Activated CD8-positive, alpha-beta T cell treated with anti-CD3 and anti-CD28 coated beads for 36 hours (primary cell): ENCODE measurements at regions of chr15 and their contacts with region 1.

Region 1: DNA sequence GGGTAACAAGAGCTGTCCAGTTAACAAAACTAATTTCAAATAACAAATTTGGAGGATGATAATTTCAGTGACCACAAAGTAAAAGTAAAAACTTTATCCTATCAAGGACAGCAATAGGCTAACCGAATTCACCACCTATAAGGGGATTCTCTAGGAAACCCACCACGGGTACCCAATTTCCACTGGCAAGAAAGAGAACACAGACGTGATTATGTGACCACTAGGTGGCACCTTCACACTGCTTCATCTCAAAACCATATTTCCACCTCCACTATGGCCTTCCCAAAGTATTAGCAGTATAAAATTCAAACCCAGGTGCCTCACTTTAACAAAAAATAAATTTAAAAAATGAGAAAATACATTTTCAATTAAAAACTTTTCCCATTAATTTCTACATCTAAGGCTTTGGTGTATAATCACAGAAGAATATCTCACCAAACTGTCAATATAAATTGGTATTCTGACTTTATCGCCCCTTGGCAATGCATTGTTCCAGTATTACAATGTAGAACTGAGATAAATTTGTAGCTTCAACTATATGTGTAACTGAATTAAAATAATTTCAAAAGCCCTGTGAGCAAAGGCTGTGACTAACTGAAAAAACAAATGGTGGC is 96.5 kb downstream of the FSIP1 start:
- DNase-seq: peak; percentile 51
- ATAC-seq: no peak
- H3K4me3 Mint-ChIP-seq: no peak overlapping the region
- H3K27ac Mint-ChIP-seq: no peak overlapping the region
- H3K4me1 Mint-ChIP-seq: no peaks in the 10 kb centered on the region
- H3K27me3 Mint-ChIP-seq: no peaks in the 10 kb centered on the region
- CTCF ChIP-seq: peak; percentile 96

Region 2: GRCh38 chr15:39666677-39667076 is 19.4 kb before region 1 on chr15:
- CTCF ChIA-PET with region 1: interaction called, 14 read pairs
- POLR2A ChIA-PET with region 1: no interaction called
- intact Hi-C with region 1: no loop called
- DNase-seq: no peak
- ATAC-seq: no peak
- H3K4me3 Mint-ChIP-seq: no peak overlapping the region
- H3K27ac Mint-ChIP-seq: no peak overlapping the region
- H3K4me1 Mint-ChIP-seq: no peaks in the 10 kb centered on the region
- H3K27me3 Mint-ChIP-seq: no peaks in the 10 kb centered on the region
- CTCF ChIP-seq: no peak

Region 3: GRCh38 chr15:39717134-39717533 is 31.0 kb after region 1 on chr15:
- CTCF ChIA-PET with region 1: interaction called, 15 read pairs
- POLR2A ChIA-PET with region 1: no interaction called
- intact Hi-C with region 1: no loop called
- DNase-seq: no peak
- ATAC-seq: no peak
- H3K4me3 Mint-ChIP-seq: no peak overlapping the region
- H3K27ac Mint-ChIP-seq: no peak overlapping the region
- H3K4me1 Mint-ChIP-seq: peaks cover 4% of the 10 kb centered on the region
- H3K27me3 Mint-ChIP-seq: no peaks in the 10 kb centered on the region
- CTCF ChIP-seq: no peak